B cell (primary cell): ENCODE measurements at regions of chr7 and their contacts with region 1.

Region 1: DNA sequence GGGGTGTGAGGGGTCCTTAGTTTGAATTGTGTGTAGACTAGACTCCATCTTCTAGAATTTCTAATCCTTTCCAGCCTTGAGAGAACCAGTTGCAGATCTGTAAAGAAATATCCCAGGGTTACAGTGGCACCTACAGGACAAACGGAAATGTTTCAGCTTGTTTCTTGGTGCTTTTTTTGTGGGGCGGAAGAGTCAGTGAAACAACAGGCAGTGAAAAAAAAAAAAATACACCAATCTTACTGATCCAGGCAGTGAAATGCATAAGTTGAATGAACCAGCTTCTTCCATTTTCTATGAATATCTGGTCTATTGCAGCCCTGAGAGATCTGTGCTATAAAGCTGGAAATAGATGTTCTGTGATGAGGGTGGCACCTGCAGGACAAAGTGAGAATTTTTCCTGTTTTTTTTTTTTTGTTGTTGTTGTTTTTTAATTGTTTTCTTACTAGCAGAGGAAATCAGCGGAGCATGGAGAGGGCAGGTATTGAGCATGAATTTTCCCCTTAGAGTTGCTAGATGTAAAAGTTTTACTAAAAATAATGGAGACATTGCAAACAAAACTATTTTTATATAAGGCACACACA is 81.9 kb upstream of the DYNC1I1 start:
- DNase-seq: peak; percentile 68
- ATAC-seq: peak; percentile 59
- H3K4me3 ChIP-seq: no peak overlapping the region
- H3K4me3 Mint-ChIP-seq: peak overlapping the region; percentile 25
- H3K27ac ChIP-seq: no peak overlapping the region
- H3K27ac Mint-ChIP-seq: no peak overlapping the region
- H3K4me1 ChIP-seq: peaks cover 0 to 4% of the 10 kb centered on the region in 2 donors
- H3K4me1 Mint-ChIP-seq: peaks cover 5% of the 10 kb centered on the region
- H3K27me3 ChIP-seq: no peaks in the 10 kb centered on the region
- H3K27me3 Mint-ChIP-seq: peaks cover 9% of the 10 kb centered on the region
- CTCF ChIP-seq: peak; percentile 83

Region 2: DNA sequence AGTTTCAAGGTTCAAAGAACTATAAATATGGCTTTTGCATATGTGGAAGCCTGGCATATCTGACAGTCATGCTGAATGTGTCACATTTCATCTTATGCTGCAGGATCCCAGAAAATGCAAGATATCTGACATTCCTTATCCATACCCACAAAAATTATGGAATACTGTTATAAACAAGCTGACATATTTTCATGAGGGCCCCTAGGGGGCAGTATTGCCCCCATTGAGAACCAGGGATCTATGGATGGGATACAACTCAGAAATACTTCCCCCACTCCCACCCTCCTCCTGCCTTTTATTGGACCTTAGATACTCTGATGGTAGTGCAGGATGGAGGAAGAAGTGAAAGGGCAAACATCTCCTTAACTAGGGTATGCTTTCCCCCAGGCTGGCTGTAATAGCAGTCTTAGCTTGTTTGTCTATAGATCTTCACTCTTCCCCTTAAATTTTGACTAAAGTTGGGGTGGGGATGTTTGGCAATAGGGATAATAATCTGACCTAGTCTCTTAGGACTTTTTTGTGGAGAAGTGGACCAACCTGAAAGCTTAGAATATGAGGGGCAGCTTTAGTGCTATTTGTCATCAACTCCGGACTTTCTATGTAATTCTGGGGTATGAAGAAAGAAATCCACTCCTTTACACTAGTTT is 1787.6 kb before region 1 on chr7:
- CTCF ChIA-PET with region 1: no interaction called
- POLR2A ChIA-PET with region 1: no interaction called
- intact Hi-C with region 1: loop called (anchors 5 kb)
- DNase-seq: peak; percentile 66
- ATAC-seq: peak; percentile 41
- H3K4me3 ChIP-seq: no peak overlapping the region
- H3K4me3 Mint-ChIP-seq: no peak overlapping the region
- H3K27ac ChIP-seq: no peak overlapping the region
- H3K27ac Mint-ChIP-seq: no peak overlapping the region
- H3K4me1 ChIP-seq: no peaks in the 10 kb centered on the region
- H3K4me1 Mint-ChIP-seq: no peaks in the 10 kb centered on the region
- H3K27me3 ChIP-seq: no peaks in the 10 kb centered on the region
- H3K27me3 Mint-ChIP-seq: peaks cover 25% of the 10 kb centered on the region
- CTCF ChIP-seq: peak; percentile 80

Region 3: GRCh38 chr7:95396136-95397032 is 294.1 kb before region 1 on chr7 and contains the start of gene PON3:
- CTCF ChIA-PET with region 1: no interaction called
- POLR2A ChIA-PET with region 1: no interaction called
- intact Hi-C with region 1: no loop called
- DNase-seq: peak; percentile 44
- ATAC-seq: peak; percentile 54
- H3K4me3 ChIP-seq: peak within 1 kb of the TSS in 4 of 5 experiments; percentile 21 to 51 (median 46)
- H3K4me3 Mint-ChIP-seq: peak within 1 kb of the TSS; percentile 75
- H3K27ac ChIP-seq: no peak within 1 kb of the TSS
- H3K27ac Mint-ChIP-seq: no peak within 1 kb of the TSS
- H3K4me1 ChIP-seq: peaks cover 6 to 8% of the 10 kb centered on the region in 2 donors
- H3K4me1 Mint-ChIP-seq: no peaks in the 10 kb centered on the region
- H3K27me3 ChIP-seq: peaks cover 0 to 21% (median 12%) of the 10 kb centered on the region in 4 experiments
- H3K27me3 Mint-ChIP-seq: peaks cover 42% of the 10 kb centered on the region
- CTCF ChIP-seq: peak; percentile 29
- total RNA-seq, gene PON3: not detected in 2 replicates

Region 4: GRCh38 chr7:95511716-95512260 is 178.7 kb before region 1 on chr7:
- CTCF ChIA-PET with region 1: interaction called, 695 read pairs
- POLR2A ChIA-PET with region 1: no interaction called
- intact Hi-C with region 1: loop called (anchors 1 kb)
- DNase-seq: peak; percentile 79
- ATAC-seq: peak; percentile 89
- H3K4me3 ChIP-seq: no peak overlapping the region
- H3K4me3 Mint-ChIP-seq: peak overlapping the region; percentile 37
- H3K27ac ChIP-seq: no peak overlapping the region
- H3K27ac Mint-ChIP-seq: no peak overlapping the region
- H3K4me1 ChIP-seq: peaks cover 5% of the 10 kb centered on the region in 2 donors
- H3K4me1 Mint-ChIP-seq: peaks cover 4% of the 10 kb centered on the region
- H3K27me3 ChIP-seq: peaks cover 0 to 6% (median 0%) of the 10 kb centered on the region in 4 experiments
- H3K27me3 Mint-ChIP-seq: no peaks in the 10 kb centered on the region
- CTCF ChIP-seq: peak; percentile 94

Region 5: DNA sequence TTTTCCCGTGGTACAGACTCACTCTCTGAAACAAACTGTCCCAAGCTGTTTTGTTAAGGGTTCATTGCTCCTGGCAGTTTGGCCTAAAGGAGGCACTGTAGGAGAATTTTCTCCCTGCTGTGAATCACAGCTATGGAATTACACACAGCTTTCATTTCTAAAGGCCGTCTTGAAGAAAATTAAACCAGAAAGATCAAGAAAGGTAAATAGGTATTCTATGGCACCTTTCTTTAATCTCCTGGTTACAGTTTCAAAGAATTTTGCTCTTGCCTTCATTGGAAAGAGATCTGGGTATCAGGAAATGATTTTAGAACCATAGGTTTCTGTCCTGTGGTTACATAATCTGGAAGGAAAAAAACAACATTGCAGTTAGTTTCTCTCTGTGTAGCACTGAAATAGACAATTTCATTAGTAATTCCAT is 145.4 kb before region 1 on chr7:
- CTCF ChIA-PET with region 1: interaction called, 270 read pairs
- POLR2A ChIA-PET with region 1: no interaction called
- intact Hi-C with region 1: loop called (anchors 1 kb)
- DNase-seq: peak; percentile 26
- ATAC-seq: no peak
- H3K4me3 ChIP-seq: no peak overlapping the region
- H3K4me3 Mint-ChIP-seq: peak overlapping the region; percentile 0
- H3K27ac ChIP-seq: no peak overlapping the region
- H3K27ac Mint-ChIP-seq: no peak overlapping the region
- H3K4me1 ChIP-seq: peaks cover 3 to 8% of the 10 kb centered on the region in 2 donors
- H3K4me1 Mint-ChIP-seq: peaks cover 9% of the 10 kb centered on the region
- H3K27me3 ChIP-seq: no peaks in the 10 kb centered on the region
- H3K27me3 Mint-ChIP-seq: peaks cover 3% of the 10 kb centered on the region
- CTCF ChIP-seq: no peak

Region 6: DNA sequence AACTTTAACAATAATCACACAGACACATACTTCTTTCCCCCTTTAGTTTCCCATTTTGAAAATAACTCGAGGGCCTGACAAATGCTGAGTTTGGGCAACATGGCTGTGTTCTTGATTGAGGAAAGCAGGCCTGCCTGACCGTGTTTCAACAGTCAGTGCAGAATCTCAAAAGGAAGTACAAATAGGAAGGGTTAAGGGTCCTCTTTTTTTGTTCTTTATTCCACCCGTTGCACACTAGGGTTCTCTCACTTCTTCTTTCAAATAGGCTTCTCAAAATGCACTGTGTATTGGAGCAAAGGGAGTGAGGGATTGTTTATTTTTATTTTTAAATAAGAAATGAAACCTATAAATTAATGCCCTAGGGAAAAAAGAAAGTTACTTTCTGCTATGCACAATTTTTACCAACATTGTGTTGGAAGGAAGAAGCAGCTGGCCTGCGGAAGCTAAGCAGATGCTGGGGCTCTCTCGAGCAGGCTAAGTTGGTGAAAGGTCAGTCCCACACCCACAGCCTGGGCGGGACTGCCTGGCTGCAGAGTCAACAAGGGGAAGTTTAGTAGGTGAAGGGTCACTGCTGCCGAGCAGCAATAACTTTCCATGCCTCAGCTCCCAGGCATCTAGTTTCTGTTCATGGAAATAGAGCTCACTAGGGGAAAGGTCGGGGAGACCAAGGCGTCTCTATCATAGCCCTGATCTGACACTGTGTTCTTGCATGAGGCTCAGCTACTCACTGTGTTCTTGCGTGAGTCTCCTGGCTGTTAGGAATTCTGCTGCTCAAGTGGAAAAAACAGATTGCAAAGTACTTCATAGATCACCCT is 81.9 kb before region 1 on chr7:
- CTCF ChIA-PET with region 1: interaction called, 45 read pairs
- POLR2A ChIA-PET with region 1: interaction called, 4 read pairs
- intact Hi-C with region 1: loop called (anchors 2 kb)
- DNase-seq: peak; percentile 74
- ATAC-seq: peak; percentile 94
- H3K4me3 ChIP-seq: peak overlapping the region; percentile 15 to 60 (median 34)
- H3K4me3 Mint-ChIP-seq: peak overlapping the region; percentile 90
- H3K27ac ChIP-seq: peak overlapping the region; percentile 71 to 72
- H3K27ac Mint-ChIP-seq: peak overlapping the region; percentile 97
- H3K4me1 ChIP-seq: peaks cover 38 to 42% of the 10 kb centered on the region in 2 donors
- H3K4me1 Mint-ChIP-seq: peaks cover 60% of the 10 kb centered on the region
- H3K27me3 ChIP-seq: no peaks in the 10 kb centered on the region
- H3K27me3 Mint-ChIP-seq: no peaks in the 10 kb centered on the region
- CTCF ChIP-seq: no peak

Region 7: DNA sequence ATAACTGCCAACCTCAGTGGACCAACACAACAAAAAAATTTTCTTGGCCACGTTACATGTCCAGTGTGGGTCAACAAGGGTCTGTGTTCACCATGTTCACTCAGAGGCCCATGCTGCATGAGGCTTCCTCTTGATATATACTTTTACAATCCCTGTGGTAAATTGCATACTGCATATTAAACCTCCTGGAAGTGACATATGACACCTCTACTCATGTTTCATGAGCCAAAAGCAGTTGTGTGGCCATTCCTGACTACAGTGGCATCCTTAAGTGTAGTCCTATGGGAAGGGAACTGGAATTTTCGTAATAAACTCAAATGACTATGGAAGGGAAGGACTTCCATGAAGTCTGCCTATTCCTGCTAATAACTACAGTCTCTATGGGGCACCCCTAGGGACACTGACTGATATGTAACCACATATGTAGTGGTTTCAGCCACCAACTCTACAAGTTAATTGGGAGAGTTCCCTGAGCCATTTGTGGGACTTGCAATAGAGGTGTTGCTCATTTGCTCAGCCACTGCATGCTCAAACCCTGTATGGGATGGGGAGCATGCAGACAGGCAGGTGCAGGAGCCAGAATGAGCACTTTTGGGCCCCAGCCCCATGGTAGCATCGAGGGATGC is 91.6 kb after region 1 on chr7:
- CTCF ChIA-PET with region 1: no interaction called
- POLR2A ChIA-PET with region 1: no interaction called
- intact Hi-C with region 1: no loop called
- DNase-seq: no peak
- ATAC-seq: no peak
- H3K4me3 ChIP-seq: no peak overlapping the region
- H3K4me3 Mint-ChIP-seq: no peak overlapping the region
- H3K27ac ChIP-seq: no peak overlapping the region
- H3K27ac Mint-ChIP-seq: no peak overlapping the region
- H3K4me1 ChIP-seq: no peaks in the 10 kb centered on the region
- H3K4me1 Mint-ChIP-seq: no peaks in the 10 kb centered on the region
- H3K27me3 ChIP-seq: peaks cover 0 to 6% (median 3%) of the 10 kb centered on the region in 4 experiments
- H3K27me3 Mint-ChIP-seq: peaks cover 18% of the 10 kb centered on the region
- CTCF ChIP-seq: no peak

Region 8: GRCh38 chr7:96151889-96152288 is 461.4 kb after region 1 on chr7:
- CTCF ChIA-PET with region 1: no interaction called
- POLR2A ChIA-PET with region 1: interaction called, 10 read pairs
- intact Hi-C with region 1: no loop called
- DNase-seq: no peak
- ATAC-seq: no peak
- H3K4me3 ChIP-seq: no peak overlapping the region
- H3K4me3 Mint-ChIP-seq: no peak overlapping the region
- H3K27ac ChIP-seq: no peak overlapping the region
- H3K27ac Mint-ChIP-seq: no peak overlapping the region
- H3K4me1 ChIP-seq: no peaks in the 10 kb centered on the region
- H3K4me1 Mint-ChIP-seq: no peaks in the 10 kb centered on the region
- H3K27me3 ChIP-seq: no peaks in the 10 kb centered on the region
- H3K27me3 Mint-ChIP-seq: no peaks in the 10 kb centered on the region
- CTCF ChIP-seq: no peak